PC-9 (cell line): ENCODE measurements at regions of chr22 and their contacts with region 1.

Region 1: DNA sequence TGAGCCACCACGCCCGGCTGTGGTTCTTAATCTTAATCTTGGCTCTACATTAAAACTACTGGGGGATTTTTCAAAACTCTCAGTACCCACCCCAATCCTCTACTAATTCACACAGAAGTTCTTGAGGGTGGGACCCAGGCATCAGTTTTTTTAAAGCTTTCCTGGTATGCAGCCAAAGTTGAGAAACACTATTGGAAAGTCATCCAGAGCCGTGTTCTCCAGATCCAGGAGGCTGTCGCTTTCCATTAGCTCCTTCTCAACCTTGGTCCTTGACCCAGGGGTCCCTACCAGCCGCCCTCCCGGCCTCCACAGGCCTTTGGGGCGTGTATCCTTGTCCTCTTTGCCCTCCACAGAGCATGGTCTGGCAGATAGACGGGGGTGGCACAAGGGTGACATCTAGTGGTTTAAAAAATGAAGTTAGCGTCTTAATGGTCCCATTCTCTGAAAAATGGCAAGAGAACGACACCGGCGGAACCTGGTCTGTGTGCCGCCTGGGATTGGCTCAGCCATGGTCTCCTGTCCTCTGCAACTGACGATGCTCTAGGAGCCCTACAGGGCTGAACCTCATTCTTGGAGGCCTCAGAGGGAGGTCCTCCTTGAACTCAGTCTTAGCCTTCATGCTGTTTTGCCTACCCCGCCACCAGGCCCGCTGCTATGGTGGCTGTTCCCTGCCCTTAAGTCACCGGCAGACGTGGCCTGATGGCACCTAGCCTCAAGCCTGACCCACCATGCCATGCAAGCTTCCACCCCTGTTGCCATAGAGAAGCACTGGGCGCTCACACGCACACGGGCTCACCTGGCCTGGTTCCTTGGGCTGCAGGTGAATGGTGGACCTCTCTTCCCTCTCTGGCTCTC is 152.0 kb upstream of the SYN3 start:
- DNase-seq: peak in 1 of 2 experiments; percentile 10
- H3K4me3 ChIP-seq: no peak overlapping the region
- H3K27ac ChIP-seq: no peak overlapping the region
- H3K4me1 ChIP-seq: no peaks in the 10 kb centered on the region
- H3K27me3 ChIP-seq: peaks cover 78% of the 10 kb centered on the region
- CTCF ChIP-seq: peak; percentile 77

Region 2: GRCh38 chr22:32103658-32104315 is 1106.4 kb before region 1 on chr22:
- CTCF ChIA-PET with region 1: no interaction called
- POLR2A ChIA-PET with region 1: no interaction called
- intact Hi-C with region 1: loop called (anchors 10 kb)
- DNase-seq: peak in 1 of 2 experiments; percentile 33
- H3K4me3 ChIP-seq: no peak overlapping the region
- H3K27ac ChIP-seq: no peak overlapping the region
- H3K4me1 ChIP-seq: no peaks in the 10 kb centered on the region
- H3K27me3 ChIP-seq: peaks cover 14% of the 10 kb centered on the region
- CTCF ChIP-seq: peak; percentile 74

Region 3: GRCh38 chr22:33000342-33001280 is 209.5 kb before region 1 on chr22:
- CTCF ChIA-PET with region 1: no interaction called
- POLR2A ChIA-PET with region 1: no interaction called
- intact Hi-C with region 1: no loop called
- DNase-seq: peak in 1 of 2 experiments; percentile 60
- H3K4me3 ChIP-seq: no peak overlapping the region
- H3K27ac ChIP-seq: no peak overlapping the region
- H3K4me1 ChIP-seq: peaks cover 27% of the 10 kb centered on the region
- H3K27me3 ChIP-seq: no peaks in the 10 kb centered on the region
- CTCF ChIP-seq: peak; percentile 97

Region 4: DNA sequence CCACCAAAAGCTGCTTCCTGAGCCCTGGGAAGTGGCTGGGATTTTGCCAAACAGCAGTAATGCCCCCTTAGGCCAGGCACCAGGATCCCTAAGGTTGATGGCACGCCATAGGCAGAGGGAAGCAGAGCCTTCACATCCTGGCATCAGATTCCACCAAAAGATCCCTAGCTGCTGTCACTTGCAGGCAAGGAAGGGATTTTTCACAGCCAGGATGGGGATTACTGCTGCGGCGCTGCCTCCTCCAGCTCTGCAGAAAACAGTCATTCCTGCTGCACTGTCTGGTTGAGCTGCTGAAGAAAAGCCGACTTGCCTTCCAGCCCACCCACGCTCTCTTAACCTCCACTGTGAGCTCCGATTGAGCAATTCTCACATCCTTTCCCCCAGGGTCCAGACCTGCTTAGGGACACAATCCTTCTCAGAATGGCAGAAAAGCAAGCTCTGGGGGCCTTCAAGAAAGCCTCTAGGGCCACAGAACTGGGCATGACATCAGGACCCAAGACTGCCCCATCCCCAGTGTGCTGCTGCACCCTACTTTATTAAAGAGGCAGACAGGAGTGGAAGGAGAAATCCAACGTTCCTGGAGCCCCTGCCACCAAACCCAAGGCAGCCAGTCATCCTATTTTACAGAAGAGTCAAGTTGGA is 171.9 kb before region 1 on chr22:
- CTCF ChIA-PET with region 1: no interaction called
- POLR2A ChIA-PET with region 1: no interaction called
- intact Hi-C with region 1: no loop called
- DNase-seq: no peak
- H3K4me3 ChIP-seq: no peak overlapping the region
- H3K27ac ChIP-seq: no peak overlapping the region
- H3K4me1 ChIP-seq: no peaks in the 10 kb centered on the region
- H3K27me3 ChIP-seq: peaks cover 93% of the 10 kb centered on the region
- CTCF ChIP-seq: no peak